Posterior cingulate gyrus (tissue), 11 donors: ENCODE measurements at regions of chr13 and their contacts with region 1.

Region 1: GRCh38 chr13:20160847-20161274 is at the start of gene GJA3:
- DNase-seq: no peak

Region 2: DNA sequence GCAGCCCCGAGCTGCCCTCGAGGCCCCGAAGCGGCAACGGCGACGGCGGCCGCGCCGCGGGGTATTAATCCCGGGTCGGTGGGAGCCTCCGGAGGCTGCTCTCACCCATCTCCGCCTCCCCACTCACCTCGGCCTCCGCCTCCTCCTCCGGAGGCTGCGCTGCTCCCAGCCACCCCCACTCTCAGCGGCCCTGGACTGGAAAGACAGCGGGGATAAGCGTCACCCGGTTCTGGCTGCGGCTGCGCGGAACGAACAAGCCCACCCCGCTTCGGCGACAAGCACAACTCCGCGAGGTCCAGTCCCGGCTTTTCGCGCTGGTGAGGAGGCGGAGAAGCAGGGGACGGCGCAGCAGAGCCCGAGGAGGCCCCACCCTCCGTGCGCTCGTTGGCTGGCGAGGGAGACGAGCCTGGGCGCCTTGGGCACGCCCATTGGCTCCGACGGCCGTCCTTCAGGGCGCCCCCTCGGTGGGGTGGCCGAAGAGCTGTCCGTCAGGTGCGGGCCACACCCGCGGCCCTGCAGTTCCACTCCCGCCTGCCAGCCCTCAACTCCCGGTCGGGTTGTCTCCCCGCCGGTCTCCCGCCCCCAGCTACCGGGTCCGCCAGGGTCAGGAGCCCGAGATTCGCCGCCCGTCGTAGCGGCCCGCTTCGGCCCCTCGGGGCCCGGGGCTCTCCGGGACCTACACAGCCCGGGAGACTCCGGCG is 297.4 kb before region 1 on chr13 and contains the start of gene ZMYM5:
- intact Hi-C with region 1: no loop called
- DNase-seq: peak; percentile 98 to 100 (median 99)

Region 3: GRCh38 chr13:19984430-19985218 is 176.2 kb before region 1 on chr13:
- intact Hi-C with region 1: loop called (anchors 1 kb)
- DNase-seq: no peak

Region 4: GRCh38 chr13:20035130-20035529 is 125.7 kb before region 1 on chr13:
- intact Hi-C with region 1: loop called (anchors 1 kb)
- DNase-seq: no peak

Region 5: GRCh38 chr13:20090349-20090748 is 70.5 kb before region 1 on chr13:
- intact Hi-C with region 1: loop called (anchors 2 kb)
- DNase-seq: no peak

Region 6: DNA sequence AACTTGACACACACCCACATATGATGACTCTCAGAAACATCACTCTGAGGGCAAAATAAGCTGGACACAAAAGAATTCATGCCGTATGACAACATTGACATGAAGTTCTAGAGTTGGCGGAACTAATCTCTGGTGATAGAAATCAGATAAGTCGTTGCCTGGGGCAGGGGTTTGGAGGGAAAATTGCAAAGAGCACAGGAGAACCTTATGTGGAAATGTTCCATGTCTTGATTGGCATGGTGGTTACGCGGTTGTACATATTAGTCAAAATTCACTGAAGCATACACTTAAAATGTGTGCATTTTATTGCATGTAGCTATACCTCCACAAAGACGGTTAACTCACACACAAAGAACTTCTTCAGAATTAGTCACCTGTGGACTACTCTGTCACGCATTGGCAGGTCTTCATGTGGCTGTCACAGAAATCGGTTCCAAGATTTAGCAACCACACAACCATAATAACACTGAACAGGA is 209.1 kb after region 1 on chr13:
- intact Hi-C with region 1: no loop called
- DNase-seq: no peak

Region 7: GRCh38 chr13:20760872-20761271 is 600.0 kb after region 1 on chr13:
- intact Hi-C with region 1: no loop called
- DNase-seq: no peak